ENCODE measurements at regions of chr2 and their contacts with region 1.

Region 1: GRCh38 chr2:57516698-57517340 is 529.8 kb upstream of the VRK2 start:
- DNase-seq: no peak
- H3K4me3 ChIP-seq: no peak overlapping the region
- H3K4me3 Mint-ChIP-seq: no peak overlapping the region
- H3K27ac Mint-ChIP-seq: no peak overlapping the region
- H3K4me1 ChIP-seq: no peaks in the 10 kb centered on the region
- H3K4me1 Mint-ChIP-seq: no peaks in the 10 kb centered on the region
- H3K27me3 ChIP-seq: no peaks in the 10 kb centered on the region
- H3K27me3 Mint-ChIP-seq: peaks cover 2% of the 10 kb centered on the region
- CTCF ChIP-seq: peak; percentile 40 to 43

Region 2: GRCh38 chr2:56077352-56077915 is 1439.4 kb before region 1 on chr2:
- CTCF ChIA-PET with region 1: no interaction called
- POLR2A ChIA-PET with region 1: no interaction called
- intact Hi-C with region 1: loop called (anchors 1 kb)
- DNase-seq: peak; percentile 55 to 68
- H3K4me3 ChIP-seq: no peak overlapping the region
- H3K4me3 Mint-ChIP-seq: no peak overlapping the region
- H3K27ac Mint-ChIP-seq: no peak overlapping the region
- H3K4me1 ChIP-seq: no peaks in the 10 kb centered on the region
- H3K4me1 Mint-ChIP-seq: no peaks in the 10 kb centered on the region
- H3K27me3 ChIP-seq: no peaks in the 10 kb centered on the region
- H3K27me3 Mint-ChIP-seq: peaks cover 12% of the 10 kb centered on the region
- CTCF ChIP-seq: peak; percentile 71 to 81

Region 3: DNA sequence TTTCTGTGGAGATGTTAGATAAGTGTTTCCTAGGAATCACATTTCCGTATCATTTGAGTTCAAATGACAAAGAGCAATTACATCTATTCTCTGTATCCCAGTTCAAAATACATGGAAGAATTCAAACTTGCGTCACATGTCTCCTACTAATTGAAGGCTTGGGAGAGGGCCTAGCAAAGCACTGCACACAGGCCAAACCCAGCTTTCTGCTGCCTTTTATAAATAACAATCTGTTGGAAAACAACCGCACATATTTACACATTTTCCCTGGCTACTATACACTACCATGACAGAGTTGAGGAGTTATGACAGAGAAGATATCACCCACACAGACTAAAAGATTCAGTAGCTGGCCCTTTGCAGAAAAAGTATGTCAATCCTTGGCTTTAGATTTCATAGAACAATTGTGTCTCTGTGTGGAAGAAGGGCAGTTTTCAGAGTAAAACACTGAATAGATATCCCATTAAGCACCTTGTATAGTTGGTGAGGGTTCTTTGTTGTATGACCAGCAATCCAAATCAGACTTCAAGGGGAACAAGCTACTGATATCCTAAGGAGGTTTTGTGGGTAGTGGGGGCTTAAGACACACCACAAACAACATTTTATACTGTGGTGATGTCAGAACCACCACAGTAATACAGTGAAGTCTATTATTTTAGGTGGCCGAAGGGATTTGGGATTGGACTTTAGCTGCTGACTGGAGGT is 471.7 kb before region 1 on chr2:
- CTCF ChIA-PET with region 1: no interaction called
- POLR2A ChIA-PET with region 1: no interaction called
- intact Hi-C with region 1: no loop called
- DNase-seq: no peak
- H3K4me3 ChIP-seq: no peak overlapping the region
- H3K4me3 Mint-ChIP-seq: no peak overlapping the region
- H3K27ac Mint-ChIP-seq: no peak overlapping the region
- H3K4me1 ChIP-seq: no peaks in the 10 kb centered on the region
- H3K4me1 Mint-ChIP-seq: no peaks in the 10 kb centered on the region
- H3K27me3 ChIP-seq: no peaks in the 10 kb centered on the region
- H3K27me3 Mint-ChIP-seq: no peaks in the 10 kb centered on the region
- CTCF ChIP-seq: no peak

Region 4: DNA sequence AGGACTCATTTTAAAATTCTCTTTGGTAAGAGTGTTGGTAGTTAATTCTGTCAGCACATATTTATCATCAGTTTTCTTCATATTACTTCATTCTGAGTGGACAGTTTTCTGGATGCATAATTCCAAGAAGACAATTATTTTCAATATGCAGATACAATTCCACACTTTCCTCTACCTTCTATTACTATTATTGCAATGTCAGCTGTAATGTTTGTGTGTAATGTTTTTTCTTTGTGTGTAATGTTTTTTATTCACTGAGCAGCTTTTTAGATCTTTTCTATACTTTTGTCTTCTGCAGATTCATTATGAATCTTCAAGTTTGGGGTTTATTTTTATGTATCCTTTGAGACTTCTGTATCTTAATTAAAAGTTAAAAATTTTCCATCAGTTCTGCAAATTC is 265.8 kb after region 1 on chr2:
- CTCF ChIA-PET with region 1: no interaction called
- POLR2A ChIA-PET with region 1: no interaction called
- intact Hi-C with region 1: no loop called
- DNase-seq: no peak
- H3K4me3 ChIP-seq: no peak overlapping the region
- H3K4me3 Mint-ChIP-seq: no peak overlapping the region
- H3K27ac Mint-ChIP-seq: no peak overlapping the region
- H3K4me1 ChIP-seq: no peaks in the 10 kb centered on the region
- H3K4me1 Mint-ChIP-seq: no peaks in the 10 kb centered on the region
- H3K27me3 ChIP-seq: no peaks in the 10 kb centered on the region
- H3K27me3 Mint-ChIP-seq: peaks cover 3% of the 10 kb centered on the region
- CTCF ChIP-seq: no peak